GM13976 (cell line): ENCODE measurements at regions of chr2 and their contacts with region 1.

Region 1: DNA sequence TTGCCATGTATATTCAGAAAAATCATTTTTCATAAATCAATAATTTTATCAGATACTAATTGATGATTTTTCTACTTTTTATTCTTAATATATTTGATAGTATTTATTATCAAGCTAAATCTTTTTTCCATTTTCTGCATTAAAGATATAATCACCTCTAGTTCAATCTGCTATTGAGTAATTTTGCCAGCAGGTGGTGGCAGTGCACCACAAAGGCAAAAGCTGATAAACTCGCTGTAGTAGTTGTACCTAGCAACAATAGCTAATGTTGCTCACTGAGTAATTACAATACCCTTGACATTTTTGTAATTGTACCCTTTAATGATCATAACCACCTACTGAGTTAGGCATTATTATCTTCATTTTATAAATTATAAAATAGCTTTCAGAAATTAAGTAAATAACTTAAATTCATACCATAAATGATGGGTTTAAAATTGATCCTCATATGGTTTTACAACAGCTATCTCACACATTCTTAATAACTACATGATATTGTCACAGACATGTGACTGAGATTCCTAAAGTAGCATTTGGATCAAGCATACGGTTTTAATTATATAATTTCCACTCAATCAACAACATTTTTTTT is 52.0 kb upstream of the CALCRL start:
- DNase-seq: peak; percentile 10
- CTCF ChIP-seq: peak; percentile 68

Region 2: GRCh38 chr2:187372213-187372612 is 127.8 kb before region 1 on chr2:
- in situ Hi-C with region 1: no loop called
- DNase-seq: no peak
- CTCF ChIP-seq: no peak

Region 3: DNA sequence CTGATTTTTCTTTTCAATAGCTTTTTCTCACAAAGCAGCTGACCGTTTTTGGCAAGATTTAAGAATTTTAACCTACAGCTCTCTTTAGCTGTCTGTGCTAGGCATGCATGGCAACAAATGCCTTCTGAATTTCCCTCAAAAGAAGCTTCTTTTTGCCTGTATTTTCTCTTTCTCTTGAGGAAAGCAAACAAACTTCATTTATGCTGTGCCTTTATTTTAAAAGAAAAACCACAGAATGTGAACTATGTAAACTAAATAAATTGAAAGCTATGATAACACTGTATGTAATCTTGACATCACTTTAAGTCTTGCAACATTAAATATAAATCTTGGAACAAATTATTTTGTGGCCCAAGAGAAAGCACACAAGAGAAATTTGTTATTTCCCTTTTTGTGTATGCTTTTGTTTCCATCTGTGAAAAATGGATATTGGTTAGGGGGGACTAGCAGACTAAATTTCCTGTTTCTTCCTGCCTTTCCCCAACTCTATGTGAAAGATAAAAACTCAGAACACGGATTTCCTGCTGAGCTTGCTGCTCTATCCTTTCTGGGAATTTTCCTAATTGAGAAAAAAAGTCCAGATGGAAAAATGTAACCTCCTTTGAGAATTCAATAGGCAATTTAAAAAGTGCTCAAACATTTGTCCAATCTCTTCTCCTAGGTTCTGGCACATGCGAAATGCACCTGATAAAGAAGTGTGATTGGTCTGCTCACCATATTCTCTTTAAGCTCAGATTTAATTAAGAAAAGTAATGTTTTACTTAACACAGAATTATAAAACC is 75.1 kb after region 1 on chr2:
- in situ Hi-C with region 1: loop called (anchors 10 kb)
- DNase-seq: no peak
- CTCF ChIP-seq: no peak